H1 (cell line): ENCODE measurements at regions of chr9 and their contacts with region 1.

Region 1: DNA sequence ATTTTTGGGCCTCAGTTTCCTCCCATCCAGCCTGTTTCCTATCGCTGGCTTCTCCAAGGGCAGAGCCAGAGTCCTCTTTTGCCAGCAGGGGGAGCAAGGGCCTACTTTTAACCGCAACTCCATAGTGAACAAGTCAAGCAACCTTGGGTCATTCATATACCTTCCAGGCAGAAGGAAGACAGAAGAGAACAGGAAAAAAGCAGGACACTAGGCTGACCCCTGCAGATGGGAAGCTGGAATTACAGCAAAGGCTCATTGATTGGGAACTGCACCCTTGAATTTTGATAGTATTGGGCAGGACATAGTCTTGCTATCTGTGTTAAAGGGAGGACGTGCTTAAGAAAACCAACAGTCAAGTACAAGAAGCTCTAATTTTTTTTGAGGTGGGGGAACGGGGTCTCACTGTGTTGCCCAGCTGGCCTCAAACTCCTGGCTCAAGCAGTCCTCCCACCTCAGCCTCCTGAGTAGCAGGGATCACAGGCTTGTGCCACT is 30.1 kb downstream of the QRFP start:
- DNase-seq: peak; percentile 85 to 88
- H3K4me3 ChIP-seq: no peak overlapping the region
- H3K27ac ChIP-seq: no peak overlapping the region
- H3K4me1 ChIP-seq: no peaks in the 10 kb centered on the region
- H3K27me3 ChIP-seq: no peaks in the 10 kb centered on the region
- CTCF ChIP-seq: peak; percentile 67 to 99 (median 95)
- EP300 ChIP-seq: no peak
- POLR2A ChIP-seq: no peak
- RAD21 ChIP-seq: peak; percentile 62 to 70

Region 2: DNA sequence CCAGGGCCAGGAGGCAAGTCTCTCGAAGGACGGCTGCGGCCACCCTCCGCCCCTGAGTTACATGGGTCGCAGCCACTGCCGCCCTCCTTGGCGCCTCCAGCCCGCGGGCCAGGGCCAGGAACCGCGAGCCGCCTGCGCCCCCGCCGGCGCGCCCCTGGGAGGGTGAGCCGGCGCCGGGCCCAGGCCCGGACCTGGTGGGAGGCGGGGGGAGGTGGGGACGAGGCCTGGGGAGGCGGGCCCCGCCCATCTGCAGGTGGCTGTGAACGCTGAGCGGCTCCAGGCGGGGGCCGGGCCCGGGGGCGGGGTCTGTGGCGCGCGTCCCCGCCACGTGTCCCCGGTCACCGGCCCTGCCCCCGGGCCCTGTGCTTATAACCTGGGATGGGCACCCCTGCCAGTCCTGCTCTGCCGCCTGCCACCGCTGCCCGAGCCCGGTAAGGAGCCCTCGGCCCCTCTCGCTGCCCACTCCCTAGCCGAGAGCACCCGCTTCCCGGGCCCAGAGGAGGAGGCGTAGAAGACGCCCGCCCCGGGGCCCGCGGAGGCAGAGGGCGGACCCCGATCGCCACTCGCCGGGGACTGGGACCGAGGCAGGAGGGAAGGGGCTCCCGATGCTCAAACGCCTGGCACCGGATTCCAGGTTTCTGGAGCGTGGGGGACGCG is 421.8 kb before region 1 on chr9 and contains the start of gene ASS1:
- CTCF ChIA-PET with region 1: no interaction called
- POLR2A ChIA-PET with region 1: no interaction called
- DNase-seq: peak in 1 of 2 experiments; percentile 86
- H3K4me3 ChIP-seq: peak within 1 kb of the TSS; percentile 51 to 77 (median 65)
- H3K27ac ChIP-seq: no peak within 1 kb of the TSS
- H3K4me1 ChIP-seq: peaks cover 8 to 33% (median 26%) of the 10 kb centered on the region in 4 experiments
- H3K27me3 ChIP-seq: peaks cover 0 to 11% (median 7%) of the 10 kb centered on the region in 4 experiments; a peak in 3 of 7 replicates
- CTCF ChIP-seq: no peak
- EP300 ChIP-seq: no peak
- POLR2A ChIP-seq: no peak
- RAD21 ChIP-seq: no peak; a peak in 1 of 4 replicates
- total RNA-seq, gene ASS1: 108 and 116 TPM in 2 replicates

Region 3: DNA sequence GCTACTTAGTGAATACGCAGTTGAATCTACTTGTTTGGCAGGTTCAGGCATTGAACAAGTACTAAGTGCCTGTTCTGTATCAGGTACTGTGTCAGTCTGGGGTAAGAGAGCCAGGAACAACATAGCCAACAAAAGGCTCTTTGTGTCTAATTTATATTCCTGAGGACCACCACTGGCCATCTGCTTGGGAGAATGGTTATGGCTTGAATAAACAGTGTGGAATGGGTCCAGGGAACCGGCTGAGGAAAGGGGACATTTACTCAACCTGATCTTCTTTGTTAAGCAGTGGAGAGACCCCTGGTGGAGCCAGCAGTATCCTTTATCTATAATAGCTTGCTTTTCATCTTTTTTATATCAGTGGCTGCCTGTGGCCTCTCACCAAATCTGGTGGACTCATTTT is 134.4 kb before region 1 on chr9:
- CTCF ChIA-PET with region 1: interaction called, 25 read pairs
- POLR2A ChIA-PET with region 1: no interaction called
- DNase-seq: no peak
- H3K4me3 ChIP-seq: no peak overlapping the region
- H3K27ac ChIP-seq: no peak overlapping the region
- H3K4me1 ChIP-seq: no peaks in the 10 kb centered on the region; a peak in 1 of 7 replicates
- H3K27me3 ChIP-seq: peaks cover 0 to 1% (median 0%) of the 10 kb centered on the region in 4 experiments; a peak in 1 of 7 replicates
- CTCF ChIP-seq: peak in 1 of 3 experiments; percentile 38; a peak in 1 of 4 replicates
- EP300 ChIP-seq: no peak
- POLR2A ChIP-seq: no peak
- RAD21 ChIP-seq: 0 out of 4 replicates have a peak, but pooled peaks of 1 of the 2 experiments have one; percentile 2

Region 4: GRCh38 chr9:130770679-130771442 is 95.7 kb before region 1 on chr9:
- CTCF ChIA-PET with region 1: interaction called, 246 read pairs
- POLR2A ChIA-PET with region 1: no interaction called
- DNase-seq: no peak
- H3K4me3 ChIP-seq: no peak overlapping the region
- H3K27ac ChIP-seq: no peak overlapping the region
- H3K4me1 ChIP-seq: peaks cover 4 to 17% (median 6%) of the 10 kb centered on the region in 4 experiments
- H3K27me3 ChIP-seq: no peaks in the 10 kb centered on the region
- CTCF ChIP-seq: peak in 2 of 3 experiments; percentile 48 to 54; a peak in 2 of 4 replicates
- EP300 ChIP-seq: no peak
- POLR2A ChIP-seq: no peak
- RAD21 ChIP-seq: peak; percentile 73 to 76

Region 5: DNA sequence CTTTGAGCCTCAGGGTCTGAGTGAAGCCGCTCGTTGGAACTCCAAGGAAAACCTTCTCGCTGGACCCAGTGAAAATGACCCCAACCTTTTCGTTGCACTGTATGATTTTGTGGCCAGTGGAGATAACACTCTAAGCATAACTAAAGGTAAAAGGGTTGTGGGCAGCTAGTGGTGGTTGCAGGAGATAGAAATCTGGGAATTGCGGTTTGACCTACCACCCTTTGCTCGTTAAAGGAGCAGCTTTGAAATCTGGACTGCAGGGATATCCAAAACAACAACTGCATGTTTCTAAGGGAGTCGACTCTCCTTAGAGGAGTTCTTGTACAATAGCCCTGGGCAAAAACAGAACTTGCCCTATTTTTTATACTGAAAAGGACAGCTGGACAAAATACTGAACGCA is 12.4 kb before region 1 on chr9:
- CTCF ChIA-PET with region 1: interaction called, 19 read pairs
- POLR2A ChIA-PET with region 1: interaction called, 4 read pairs
- DNase-seq: no peak
- H3K4me3 ChIP-seq: no peak overlapping the region
- H3K27ac ChIP-seq: no peak overlapping the region
- H3K4me1 ChIP-seq: no peaks in the 10 kb centered on the region
- H3K27me3 ChIP-seq: no peaks in the 10 kb centered on the region
- CTCF ChIP-seq: no peak
- EP300 ChIP-seq: no peak
- POLR2A ChIP-seq: no peak
- RAD21 ChIP-seq: no peak

Region 6: DNA sequence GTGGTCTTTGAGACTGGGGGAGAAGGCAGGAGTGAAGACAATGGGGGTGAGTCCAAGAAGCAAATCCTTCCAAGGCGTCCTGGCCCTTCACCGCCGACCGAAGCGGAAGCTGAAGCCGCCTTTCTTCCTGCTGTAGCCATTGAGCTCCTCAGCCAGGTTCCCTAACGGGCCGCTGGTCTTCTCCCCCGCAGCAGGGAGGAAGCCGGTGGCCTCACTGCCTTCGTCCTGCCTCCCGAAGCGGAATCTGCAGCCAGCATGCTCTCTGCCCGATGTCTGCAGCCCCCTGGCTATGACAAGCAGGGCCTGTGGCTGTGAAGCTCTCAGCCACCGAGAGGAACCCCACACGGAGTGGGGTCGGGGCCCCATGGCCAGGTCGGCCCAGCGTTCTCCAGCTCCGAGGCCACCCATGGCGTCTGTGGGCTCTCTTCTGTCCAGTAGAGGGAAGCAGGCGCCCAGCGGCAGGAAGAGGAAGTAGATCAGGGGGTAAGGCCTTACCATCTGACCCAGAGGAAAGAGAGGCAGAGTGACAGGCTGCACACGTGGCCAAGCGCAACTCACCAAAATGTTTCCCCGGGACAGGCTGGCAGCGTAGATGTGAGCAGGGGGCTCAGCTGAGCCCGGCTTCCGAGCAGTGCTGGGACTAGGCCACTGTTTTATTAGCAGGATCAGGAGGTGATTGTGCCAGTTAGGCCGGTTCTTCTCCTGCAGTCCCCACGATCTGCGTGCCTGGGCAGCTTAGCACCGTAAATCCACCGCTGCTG is 27.0 kb after region 1 on chr9:
- CTCF ChIA-PET with region 1: interaction called, 49 read pairs
- POLR2A ChIA-PET with region 1: interaction called, 3 read pairs
- DNase-seq: no peak
- H3K4me3 ChIP-seq: no peak overlapping the region
- H3K27ac ChIP-seq: no peak overlapping the region
- H3K4me1 ChIP-seq: peaks cover 0 to 3% (median 0%) of the 10 kb centered on the region in 4 experiments; a peak in 3 of 7 replicates
- H3K27me3 ChIP-seq: no peaks in the 10 kb centered on the region
- CTCF ChIP-seq: peak in 2 of 3 experiments; percentile 48 to 53; a peak in 3 of 4 replicates
- EP300 ChIP-seq: no peak
- POLR2A ChIP-seq: no peak; a peak in 1 of 3 replicates
- RAD21 ChIP-seq: peak; percentile 55 to 70

Region 7: DNA sequence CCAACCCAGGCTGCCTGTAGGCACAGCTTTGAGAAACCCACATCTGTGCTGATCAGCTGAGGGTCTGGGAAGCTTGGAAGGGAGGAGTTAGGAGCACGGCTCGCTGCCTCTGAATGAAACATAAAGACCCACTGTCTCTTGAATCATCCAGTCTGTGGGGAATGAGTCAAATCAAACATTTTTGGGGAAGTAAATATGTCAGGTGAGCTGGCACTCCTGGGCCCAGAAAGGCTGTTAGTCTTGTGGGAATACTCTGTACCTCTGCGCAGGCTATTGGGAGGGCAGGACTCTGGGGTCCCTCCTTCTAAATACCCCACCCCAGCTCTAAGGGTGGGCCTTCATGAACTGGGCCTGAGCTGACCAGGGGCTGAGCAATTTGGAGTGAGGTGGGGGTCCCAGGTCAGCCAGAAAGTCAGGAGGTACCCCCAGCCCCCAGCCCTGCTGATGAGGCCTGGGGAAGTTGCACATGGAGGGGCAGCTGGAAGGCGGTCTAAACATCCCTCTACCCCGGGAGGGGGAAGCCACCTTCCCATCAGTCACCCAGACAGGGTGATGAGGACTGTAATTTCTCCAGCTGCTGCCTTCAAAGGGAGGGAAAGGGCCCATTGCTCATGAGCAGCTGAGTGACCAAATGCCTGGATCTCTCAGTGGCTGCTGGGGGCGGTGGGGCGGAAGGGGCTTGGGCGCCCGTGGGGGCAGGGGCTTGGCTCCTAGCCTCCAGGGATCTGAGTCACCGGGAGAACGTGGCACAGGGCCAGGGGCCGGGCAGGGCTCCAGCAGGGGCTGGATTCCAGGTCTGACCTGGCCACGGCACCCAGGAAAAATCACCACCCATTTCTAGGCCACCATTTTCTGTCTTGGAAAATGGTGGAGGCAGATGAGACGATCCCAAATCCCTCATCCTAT is 61.7 kb after region 1 on chr9:
- CTCF ChIA-PET with region 1: interaction called, 32 read pairs
- POLR2A ChIA-PET with region 1: no interaction called
- DNase-seq: no peak
- H3K4me3 ChIP-seq: no peak overlapping the region
- H3K27ac ChIP-seq: no peak overlapping the region
- H3K4me1 ChIP-seq: peaks cover 0 to 18% (median 8%) of the 10 kb centered on the region in 4 experiments; a peak in 6 of 7 replicates
- H3K27me3 ChIP-seq: no peaks in the 10 kb centered on the region
- CTCF ChIP-seq: no peak
- EP300 ChIP-seq: no peak
- POLR2A ChIP-seq: no peak
- RAD21 ChIP-seq: no peak

Region 8: GRCh38 chr9:130997925-130998596 is 131.5 kb after region 1 on chr9:
- CTCF ChIA-PET with region 1: interaction called, 19 read pairs
- POLR2A ChIA-PET with region 1: no interaction called
- DNase-seq: peak; percentile 67 to 99
- H3K4me3 ChIP-seq: no peak overlapping the region
- H3K27ac ChIP-seq: no peak overlapping the region
- H3K4me1 ChIP-seq: peaks cover 0 to 6% (median 1%) of the 10 kb centered on the region in 4 experiments; a peak in 3 of 7 replicates
- H3K27me3 ChIP-seq: peaks cover 0 to 9% (median 4%) of the 10 kb centered on the region in 4 experiments; a peak in 3 of 7 replicates
- CTCF ChIP-seq: peak in 2 of 3 experiments; percentile 96 to 99; a peak in 3 of 4 replicates
- EP300 ChIP-seq: no peak
- POLR2A ChIP-seq: no peak
- RAD21 ChIP-seq: peak; percentile 95 to 97

Region 9: GRCh38 chr9:131129183-131129582 is 262.7 kb after region 1 on chr9:
- CTCF ChIA-PET with region 1: no interaction called
- POLR2A ChIA-PET with region 1: no interaction called
- DNase-seq: no peak
- H3K4me3 ChIP-seq: no peak overlapping the region
- H3K27ac ChIP-seq: no peak overlapping the region
- H3K4me1 ChIP-seq: peaks cover 0 to 3% (median 0%) of the 10 kb centered on the region in 4 experiments; a peak in 1 of 7 replicates
- H3K27me3 ChIP-seq: no peaks in the 10 kb centered on the region
- CTCF ChIP-seq: no peak
- EP300 ChIP-seq: no peak
- POLR2A ChIP-seq: no peak
- RAD21 ChIP-seq: no peak

Region 10: DNA sequence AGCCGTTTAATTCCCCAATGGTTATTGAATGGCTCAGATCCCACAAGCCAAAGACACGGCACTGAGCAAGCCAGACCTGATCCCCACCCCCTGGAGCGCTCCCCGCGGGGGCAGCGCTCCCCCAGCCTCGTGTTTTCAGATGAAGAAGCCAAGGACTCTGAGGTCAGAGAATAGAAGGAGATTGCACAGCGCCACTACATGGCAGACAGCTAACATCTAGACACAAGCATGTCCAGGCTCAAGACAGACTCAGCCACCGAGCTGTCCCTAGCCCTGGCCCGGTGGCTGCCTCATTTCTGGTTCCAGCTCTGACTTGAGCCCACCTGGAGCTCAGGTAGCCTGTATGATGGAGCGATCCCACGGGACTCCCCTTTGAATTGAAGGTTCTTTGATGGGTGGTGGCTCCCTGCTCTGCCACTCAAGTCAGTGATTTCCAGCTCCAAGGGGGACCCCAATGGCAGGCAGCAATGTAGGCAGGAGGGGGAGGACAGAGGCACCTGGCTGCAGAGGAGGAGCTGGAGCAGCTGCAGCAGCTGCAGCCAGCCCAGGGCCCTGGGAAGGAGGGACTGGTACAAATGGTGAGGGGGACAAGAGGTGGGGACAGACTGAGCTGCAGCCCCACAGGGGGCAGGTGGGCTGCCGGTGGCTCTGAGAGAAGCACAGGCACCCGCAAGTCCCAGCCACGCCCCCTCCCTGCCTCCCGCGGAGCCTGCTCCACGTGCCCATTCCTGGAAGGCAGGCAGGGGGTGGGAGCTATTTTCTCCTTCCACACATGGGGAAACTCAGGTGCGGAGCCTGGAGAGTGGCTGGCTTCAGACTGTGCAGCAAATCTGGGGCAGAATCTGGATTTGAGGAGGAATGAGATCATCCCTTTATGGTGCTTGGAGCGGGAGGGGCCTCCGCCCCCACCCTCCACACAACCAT is 1335.5 kb after region 1 on chr9:
- CTCF ChIA-PET with region 1: no interaction called
- POLR2A ChIA-PET with region 1: no interaction called
- DNase-seq: no peak
- H3K4me3 ChIP-seq: no peak overlapping the region
- H3K27ac ChIP-seq: no peak overlapping the region
- H3K4me1 ChIP-seq: peaks cover 0 to 7% (median 5%) of the 10 kb centered on the region in 4 experiments; a peak in 5 of 7 replicates
- H3K27me3 ChIP-seq: no peaks in the 10 kb centered on the region
- CTCF ChIP-seq: peak in 1 of 3 experiments; percentile 6; a peak in 1 of 4 replicates
- EP300 ChIP-seq: no peak
- POLR2A ChIP-seq: no peak
- RAD21 ChIP-seq: 0 out of 4 replicates have a peak, but pooled peaks of 1 of the 2 experiments have one; percentile 3